ENCODE measurements at regions of chr20 and their contacts with region 1.

Region 1: DNA sequence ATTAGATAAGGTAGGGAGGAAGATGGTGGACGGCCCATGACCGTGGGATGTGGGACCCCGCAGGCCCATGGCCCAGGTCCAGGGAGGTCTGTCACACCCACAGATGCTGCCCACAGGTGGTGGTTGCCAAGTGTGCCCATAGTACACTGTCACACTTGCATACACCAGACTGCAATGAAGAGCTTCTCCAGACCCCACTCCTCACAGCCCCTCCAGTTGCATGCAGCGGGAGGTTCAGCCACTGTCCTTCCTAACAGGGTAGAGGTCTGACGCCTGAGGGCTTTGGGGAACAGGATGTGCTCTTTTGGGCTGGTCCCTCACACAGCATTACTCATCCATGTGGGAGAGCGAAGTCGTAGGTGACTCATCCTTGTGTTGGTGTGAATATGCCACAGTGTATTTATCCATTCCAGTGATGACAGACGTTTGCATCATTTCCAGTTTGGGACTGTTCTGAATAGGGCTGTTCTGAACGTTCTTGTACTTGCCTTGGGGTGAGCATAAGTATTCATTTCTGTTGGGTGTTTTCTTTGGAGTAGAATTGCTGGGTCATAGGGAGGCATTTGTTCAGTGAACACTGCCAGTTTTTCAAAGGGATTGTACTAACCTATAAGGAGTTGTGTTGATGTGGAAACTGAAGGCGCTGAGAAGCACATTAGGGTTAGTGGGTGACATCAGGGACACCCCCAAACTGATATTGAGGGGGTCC is 10.1 kb upstream of the PYGB start:
- DNase-seq: peak; percentile 92
- H3K4me3 ChIP-seq: no peak overlapping the region
- H3K27ac ChIP-seq: peak overlapping the region; percentile 80
- H3K4me1 ChIP-seq: peaks cover 19% of the 10 kb centered on the region
- H3K27me3 ChIP-seq: no peaks in the 10 kb centered on the region
- CTCF ChIP-seq: no peak
- POLR2A ChIP-seq: peak; percentile 51

Region 2: DNA sequence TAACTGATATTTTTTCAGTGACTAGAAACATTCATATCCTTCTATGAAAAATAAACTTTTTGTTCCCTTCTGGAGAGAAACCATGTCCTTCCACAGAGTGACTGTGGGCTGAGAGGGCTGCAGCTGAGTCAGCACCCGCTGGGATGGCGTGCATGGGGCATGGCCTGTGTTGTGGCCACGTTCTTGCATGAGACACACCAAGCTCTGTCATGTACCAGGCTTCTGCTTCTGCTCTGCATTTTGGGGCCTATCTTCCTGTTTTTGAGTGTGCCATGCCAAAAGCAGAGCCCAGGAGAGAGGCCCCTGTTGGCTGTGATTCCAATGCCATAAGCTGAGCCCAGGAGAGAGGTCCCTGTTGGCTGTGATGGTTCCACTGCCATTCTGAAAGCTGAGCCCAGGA is 256.0 kb before region 1 on chr20:
- CTCF ChIA-PET with region 1: no interaction called
- POLR2A ChIA-PET with region 1: no interaction called
- dilution Hi-C with region 1: no loop called
- intact Hi-C with region 1: no loop called
- DNase-seq: no peak
- H3K4me3 ChIP-seq: no peak overlapping the region
- H3K27ac ChIP-seq: no peak overlapping the region
- H3K4me1 ChIP-seq: no peaks in the 10 kb centered on the region
- H3K27me3 ChIP-seq: no peaks in the 10 kb centered on the region
- CTCF ChIP-seq: no peak
- POLR2A ChIP-seq: no peak

Region 3: GRCh38 chr20:25223179-25223661 is 14.5 kb before region 1 on chr20:
- CTCF ChIA-PET with region 1: interaction called, 13 read pairs
- POLR2A ChIA-PET with region 1: no interaction called
- dilution Hi-C with region 1: no loop called
- intact Hi-C with region 1: no loop called
- DNase-seq: peak; percentile 61
- H3K4me3 ChIP-seq: no peak overlapping the region
- H3K27ac ChIP-seq: peak overlapping the region; percentile 43
- H3K4me1 ChIP-seq: peaks cover 18% of the 10 kb centered on the region
- H3K27me3 ChIP-seq: no peaks in the 10 kb centered on the region
- CTCF ChIP-seq: no peak
- POLR2A ChIP-seq: no peak

Region 4: GRCh38 chr20:25532119-25532751 is 294.5 kb after region 1 on chr20:
- CTCF ChIA-PET with region 1: no interaction called
- POLR2A ChIA-PET with region 1: no interaction called
- dilution Hi-C with region 1: no loop called
- intact Hi-C with region 1: loop called (anchors 1 kb)
- DNase-seq: peak; percentile 31
- H3K4me3 ChIP-seq: no peak overlapping the region
- H3K27ac ChIP-seq: no peak overlapping the region
- H3K4me1 ChIP-seq: peaks cover 11% of the 10 kb centered on the region
- H3K27me3 ChIP-seq: no peaks in the 10 kb centered on the region
- CTCF ChIP-seq: peak in 1 of 2 donors; percentile 50
- POLR2A ChIP-seq: no peak

Measured in endothelial cell of umbilical vein (primary cell).